ENCODE measurements at regions of chr10 and their contacts with region 1.

Region 1: GRCh38 chr10:72200883-72201282 is 14.9 kb upstream of the ANAPC16 start:
- DNase-seq: no peak
- ATAC-seq: no peak

Region 2: GRCh38 chr10:71302874-71303568 is 897.9 kb before region 1 on chr10:
- intact Hi-C with region 1: no loop called
- DNase-seq: no peak
- ATAC-seq: no peak

Region 3: DNA sequence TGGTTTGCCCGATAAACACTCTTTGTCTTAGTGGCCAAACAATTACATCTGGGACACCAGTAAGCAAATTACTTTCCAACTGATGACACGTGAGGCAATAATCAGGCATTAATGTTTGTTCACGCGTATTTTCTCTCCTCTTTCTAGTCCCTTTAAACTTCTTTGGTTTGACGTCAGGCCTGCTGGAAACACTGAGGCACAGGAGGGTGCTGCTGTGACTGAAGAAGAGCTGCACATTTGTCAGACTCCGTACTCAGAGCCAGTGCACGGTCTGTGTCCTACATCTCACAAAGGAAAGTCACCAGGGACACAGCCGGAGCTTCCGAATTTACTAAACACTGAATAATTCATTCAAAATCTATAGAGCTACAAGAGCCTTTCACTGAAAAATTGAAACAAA is 42.7 kb before region 1 on chr10:
- intact Hi-C with region 1: loop called (anchors 2 kb)
- DNase-seq: no peak
- ATAC-seq: peak; percentile 76